Activated CD4-positive, alpha-beta memory T cell treated with anti-CD3 and anti-CD28 coated beads for 36 hours (primary cell): ENCODE measurements at regions of chr3 and their contacts with region 1.

Region 1: GRCh38 chr3:66483406-66483906 is 17.4 kb downstream of the LRIG1 start:
- DNase-seq: no peak
- H3K4me3 Mint-ChIP-seq: peak overlapping the region; percentile 53
- H3K27ac Mint-ChIP-seq: no peak overlapping the region
- H3K4me1 Mint-ChIP-seq: peaks cover 47% of the 10 kb centered on the region
- H3K27me3 Mint-ChIP-seq: no peaks in the 10 kb centered on the region

Region 2: GRCh38 chr3:66495646-66496045 is 12.2 kb after region 1 on chr3:
- CTCF ChIA-PET with region 1: interaction called, 8 read pairs
- POLR2A ChIA-PET with region 1: interaction called, 12 read pairs
- intact Hi-C with region 1: loop called (anchors 2 kb)
- DNase-seq: no peak
- H3K4me3 Mint-ChIP-seq: peak overlapping the region; percentile 38
- H3K27ac Mint-ChIP-seq: peak overlapping the region; percentile 69
- H3K4me1 Mint-ChIP-seq: peaks cover 78% of the 10 kb centered on the region
- H3K27me3 Mint-ChIP-seq: no peaks in the 10 kb centered on the region

Region 3: DNA sequence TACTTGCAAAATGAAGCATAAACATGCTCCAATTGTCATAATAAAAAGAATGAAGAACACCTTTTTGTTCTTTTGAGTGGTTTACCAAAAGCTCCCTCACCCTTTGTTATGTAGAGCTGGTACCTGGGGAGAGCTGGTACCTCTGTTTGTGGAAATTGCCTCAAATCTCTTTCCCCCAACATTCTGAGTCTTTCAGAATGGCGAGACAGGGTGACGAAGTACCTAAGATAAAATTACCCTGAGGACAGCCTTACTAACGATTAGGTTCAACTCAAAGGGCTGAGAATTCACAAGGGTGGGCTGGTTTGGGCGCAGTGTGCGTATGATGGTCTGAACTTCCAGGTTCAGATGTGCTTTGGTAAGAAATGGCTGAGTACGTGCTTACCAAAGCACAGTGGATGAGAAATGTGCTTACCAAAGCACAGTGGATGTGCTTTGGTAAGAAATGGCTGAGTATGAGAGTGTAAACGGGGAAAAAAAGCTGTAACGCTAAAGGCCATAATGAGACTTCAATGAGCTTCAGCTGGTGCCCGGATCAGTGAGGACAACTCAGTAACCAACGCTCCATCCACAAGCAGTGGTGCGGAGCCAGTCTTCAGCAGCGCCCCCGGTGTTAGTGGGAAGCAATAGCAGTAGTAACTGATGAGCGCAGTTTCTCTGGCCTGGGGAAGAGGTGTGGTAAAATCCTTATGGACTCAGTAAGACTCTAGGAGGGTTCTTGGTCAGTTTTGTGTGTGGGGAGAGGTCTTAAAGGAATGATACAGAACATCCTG is 89.7 kb after region 1 on chr3:
- CTCF ChIA-PET with region 1: no interaction called
- POLR2A ChIA-PET with region 1: no interaction called
- intact Hi-C with region 1: no loop called
- DNase-seq: peak; percentile 17
- H3K4me3 Mint-ChIP-seq: no peak overlapping the region
- H3K27ac Mint-ChIP-seq: no peak overlapping the region
- H3K4me1 Mint-ChIP-seq: peaks cover 3% of the 10 kb centered on the region
- H3K27me3 Mint-ChIP-seq: no peaks in the 10 kb centered on the region